ENCODE measurements at regions of chr10 and their contacts with region 1.

Region 1: DNA sequence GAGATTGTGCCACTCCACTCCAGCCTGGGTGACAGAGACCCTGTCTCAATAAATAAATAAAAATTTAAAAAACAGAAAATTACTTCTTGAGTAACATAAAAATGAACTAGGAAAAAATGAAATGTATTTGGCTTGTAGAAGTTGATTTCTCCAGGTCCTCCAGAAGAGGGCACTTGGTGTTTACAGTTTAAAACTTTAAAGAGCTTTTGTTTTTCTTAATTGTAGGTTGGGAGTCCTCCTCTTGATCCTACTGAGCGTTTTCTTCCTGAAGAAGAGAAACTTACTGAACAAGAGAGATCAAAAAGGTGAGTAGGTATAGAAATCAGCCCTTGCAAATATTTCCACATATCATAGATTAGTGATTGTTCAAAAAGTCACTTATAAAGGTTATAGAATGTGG is 16.2 kb downstream of the KIFBP start:
- DNase-seq: no peak

Region 2: GRCh38 chr10:69092959-69093850 is 88.4 kb after region 1 on chr10:
- intact Hi-C with region 1: loop called in 1 of 2 experiments (anchors 10 kb)
- DNase-seq: no peak

Measured in posterior vena cava (tissue), 2 donors.